Mammary epithelial cell (primary cell): ENCODE measurements at regions of chr6 and their contacts with region 1.

Region 1: GRCh38 chr6:99241905-99242534 is 107.5 kb downstream of the FAXC start:
- DNase-seq: peak; percentile 35
- H3K4me3 ChIP-seq: no peak overlapping the region
- H3K27ac ChIP-seq: no peak overlapping the region
- H3K4me1 ChIP-seq: no peaks in the 10 kb centered on the region
- H3K27me3 ChIP-seq: peaks cover 3% of the 10 kb centered on the region
- CTCF ChIP-seq: peak; percentile 70

Region 2: GRCh38 chr6:98769544-98769943 is 472.5 kb before region 1 on chr6:
- CTCF ChIA-PET with region 1: no interaction called
- dilution Hi-C with region 1: no loop called
- in situ Hi-C with region 1: no loop called
- intact Hi-C with region 1: loop called (anchors 2 kb)
- DNase-seq: peak; percentile 20
- H3K4me3 ChIP-seq: no peak overlapping the region
- H3K27ac ChIP-seq: no peak overlapping the region
- H3K4me1 ChIP-seq: no peaks in the 10 kb centered on the region
- H3K27me3 ChIP-seq: no peaks in the 10 kb centered on the region
- CTCF ChIP-seq: peak in 1 of 2 donors; percentile 52

Region 3: GRCh38 chr6:99151634-99152344 is 90.2 kb before region 1 on chr6:
- CTCF ChIA-PET with region 1: interaction called, 5 read pairs
- dilution Hi-C with region 1: loop called (anchors 5 kb)
- in situ Hi-C with region 1: loop called in 1 of 2 experiments (anchors 10 kb)
- intact Hi-C with region 1: loop called (anchors 1 kb)
- DNase-seq: peak; percentile 38
- H3K4me3 ChIP-seq: no peak overlapping the region
- H3K27ac ChIP-seq: no peak overlapping the region
- H3K4me1 ChIP-seq: no peaks in the 10 kb centered on the region
- H3K27me3 ChIP-seq: peaks cover 3% of the 10 kb centered on the region
- CTCF ChIP-seq: peak; percentile 74 to 81

Region 4: GRCh38 chr6:99550046-99550748 is 308.2 kb after region 1 on chr6:
- CTCF ChIA-PET with region 1: no interaction called
- dilution Hi-C with region 1: no loop called
- in situ Hi-C with region 1: no loop called
- intact Hi-C with region 1: no loop called
- DNase-seq: no peak
- H3K4me3 ChIP-seq: no peak overlapping the region
- H3K27ac ChIP-seq: no peak overlapping the region
- H3K4me1 ChIP-seq: no peaks in the 10 kb centered on the region
- H3K27me3 ChIP-seq: no peaks in the 10 kb centered on the region
- CTCF ChIP-seq: no peak